HCT116 (cell line): ENCODE measurements at regions of chr4 and their contacts with region 1.

Region 1: GRCh38 chr4:87651941-87652340 is 1.9 kb downstream of the DMP1 start:
- DNase-seq: no peak
- ATAC-seq: no peak
- H3K4me3 ChIP-seq: no peak overlapping the region
- H3K27ac ChIP-seq: no peak overlapping the region
- H3K4me1 ChIP-seq: peaks cover 0 to under 1% of the 10 kb centered on the region in 2 experiments; a peak in 2 of 4 replicates
- H3K27me3 ChIP-seq: no peaks in the 10 kb centered on the region
- CTCF ChIP-seq: no peak
- POLR2A ChIP-seq: no peak
- RAD21 ChIP-seq: no peak

Region 2: DNA sequence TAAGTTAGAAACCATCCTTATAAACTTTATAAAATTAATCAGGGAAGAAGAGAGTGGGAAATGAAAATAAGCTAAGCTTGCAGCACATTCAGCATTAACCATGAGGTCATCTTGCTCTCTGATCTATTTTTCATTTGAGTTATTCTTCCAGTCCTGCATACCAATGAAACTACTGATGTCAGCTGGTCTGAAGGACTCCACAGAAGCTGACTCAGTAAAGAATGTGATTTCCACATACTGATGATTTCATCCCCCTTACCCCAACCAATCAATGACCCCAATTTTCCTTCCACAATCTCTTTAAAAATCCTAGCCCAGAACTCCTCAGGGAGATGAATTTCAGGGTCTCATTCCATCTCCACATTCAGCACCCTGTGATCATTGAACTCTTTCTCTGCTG is 62.4 kb before region 1 on chr4:
- CTCF ChIA-PET with region 1: no interaction called
- POLR2A ChIA-PET with region 1: no interaction called
- RAD21 ChIA-PET with region 1: no interaction called
- intact Hi-C with region 1: loop called (anchors 2 kb)
- DNase-seq: no peak
- ATAC-seq: no peak
- H3K4me3 ChIP-seq: no peak overlapping the region
- H3K27ac ChIP-seq: no peak overlapping the region
- H3K4me1 ChIP-seq: no peaks in the 10 kb centered on the region
- H3K27me3 ChIP-seq: no peaks in the 10 kb centered on the region
- CTCF ChIP-seq: no peak
- POLR2A ChIP-seq: no peak
- RAD21 ChIP-seq: no peak

Region 3: GRCh38 chr4:87716371-87717265 is 64.7 kb after region 1 on chr4:
- CTCF ChIA-PET with region 1: no interaction called
- POLR2A ChIA-PET with region 1: no interaction called
- RAD21 ChIA-PET with region 1: no interaction called
- intact Hi-C with region 1: no loop called
- DNase-seq: no peak
- ATAC-seq: no peak
- H3K4me3 ChIP-seq: no peak overlapping the region
- H3K27ac ChIP-seq: no peak overlapping the region
- H3K4me1 ChIP-seq: no peaks in the 10 kb centered on the region
- H3K27me3 ChIP-seq: no peaks in the 10 kb centered on the region
- CTCF ChIP-seq: no peak
- POLR2A ChIP-seq: no peak
- RAD21 ChIP-seq: no peak